Activated CD4-positive, alpha-beta memory T cell treated with anti-CD3 and anti-CD28 coated beads for 36 hours (primary cell): ENCODE measurements at regions of chr17 and their contacts with region 1.

Region 1: DNA sequence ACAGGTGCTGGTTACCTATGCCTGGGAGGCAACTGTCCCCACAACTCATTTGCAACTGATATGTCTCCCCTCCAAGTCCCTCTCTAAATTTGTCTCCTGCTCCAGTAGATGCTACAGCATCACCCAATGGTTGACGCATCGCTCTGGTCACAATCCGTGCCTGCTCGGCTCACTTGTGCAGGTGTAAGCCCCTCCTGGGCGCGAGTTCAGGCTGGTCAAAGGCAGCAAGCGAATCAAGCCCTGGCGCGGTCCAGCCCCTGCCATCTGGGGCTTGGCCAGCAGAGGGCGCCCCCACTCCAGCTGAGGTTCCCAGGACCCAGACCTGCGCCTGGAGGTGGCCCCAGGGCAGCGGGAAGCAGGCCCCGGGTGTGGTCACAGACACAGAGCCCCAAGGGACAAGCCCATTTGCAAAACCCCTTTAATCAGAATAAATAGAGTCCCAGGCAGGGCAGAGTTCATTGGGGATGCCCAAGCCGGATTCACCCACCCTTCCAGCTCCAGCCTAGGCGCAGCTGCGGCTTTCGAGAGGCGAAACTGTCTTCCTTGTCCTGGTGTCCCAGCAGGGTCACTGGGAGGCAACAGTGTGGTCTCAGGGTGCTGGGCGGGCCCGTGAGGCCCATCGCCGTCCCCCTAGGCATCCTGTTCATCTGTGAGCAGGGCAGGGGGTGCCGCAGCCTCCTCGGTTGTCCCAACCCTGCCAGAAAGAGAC is 15.9 kb downstream of the TMC6 start:
- DNase-seq: peak; percentile 86
- H3K4me3 Mint-ChIP-seq: no peak overlapping the region
- H3K27ac Mint-ChIP-seq: peak overlapping the region; percentile 76
- H3K4me1 Mint-ChIP-seq: peaks cover 31% of the 10 kb centered on the region
- H3K27me3 Mint-ChIP-seq: no peaks in the 10 kb centered on the region

Region 2: DNA sequence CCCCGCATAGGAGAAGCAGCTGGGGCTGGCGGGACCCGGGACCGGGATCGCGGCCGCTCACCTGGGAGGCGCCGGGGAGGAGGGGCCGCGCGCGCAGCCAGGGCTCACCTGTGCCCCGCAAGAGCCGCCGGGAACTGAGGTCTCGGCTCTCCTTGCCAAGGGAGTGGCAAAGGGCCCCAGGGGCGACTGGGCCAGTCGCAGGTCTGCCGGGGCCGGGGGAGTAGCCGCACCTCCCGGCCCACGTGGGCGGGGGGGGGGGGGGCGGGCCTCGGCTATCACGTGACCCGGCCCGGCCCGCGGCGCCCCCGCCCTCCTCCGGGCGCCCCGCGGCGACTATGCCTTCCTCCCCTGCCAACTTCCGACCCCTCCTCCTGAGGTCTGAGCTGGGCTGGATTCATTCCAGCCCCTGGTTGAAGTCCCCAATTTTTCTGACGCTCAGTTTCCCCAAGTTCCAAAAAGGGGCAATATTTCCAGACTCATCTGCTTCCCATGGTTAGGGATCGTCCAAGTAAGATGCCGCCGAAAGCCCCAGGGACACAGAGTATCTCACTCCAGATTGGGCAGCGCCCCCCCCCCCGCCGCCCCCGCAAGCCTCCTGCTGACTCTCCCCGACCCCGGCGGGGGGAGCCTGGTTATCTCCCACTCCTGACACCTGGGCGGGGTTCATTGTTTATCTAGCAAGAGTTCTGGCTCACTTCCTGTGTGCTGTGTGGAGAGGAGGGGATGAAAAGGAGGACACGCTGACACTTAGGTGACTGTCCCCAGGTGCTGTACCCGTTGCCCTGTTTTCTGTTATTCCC is 16.1 kb after region 1 on chr17 and contains the start of gene TMC6:
- CTCF ChIA-PET with region 1: interaction called, 99 read pairs
- POLR2A ChIA-PET with region 1: interaction called, 12 read pairs
- intact Hi-C with region 1: no loop called
- DNase-seq: peak; percentile 85
- H3K4me3 Mint-ChIP-seq: peak within 1 kb of the TSS; percentile 97
- H3K27ac Mint-ChIP-seq: peak within 1 kb of the TSS; percentile 95
- H3K4me1 Mint-ChIP-seq: peaks cover 51% of the 10 kb centered on the region
- H3K27me3 Mint-ChIP-seq: no peaks in the 10 kb centered on the region
- total RNA-seq, gene TMC6: 157 to 162 TPM

Region 3: GRCh38 chr17:78133971-78134898 is 21.6 kb after region 1 on chr17:
- CTCF ChIA-PET with region 1: interaction called, 99 read pairs
- POLR2A ChIA-PET with region 1: interaction called, 4 read pairs
- intact Hi-C with region 1: loop called (anchors 1 kb)
- DNase-seq: peak; percentile 87
- H3K4me3 Mint-ChIP-seq: peak overlapping the region; percentile 65
- H3K27ac Mint-ChIP-seq: peak overlapping the region; percentile 54
- H3K4me1 Mint-ChIP-seq: peaks cover 70% of the 10 kb centered on the region
- H3K27me3 Mint-ChIP-seq: no peaks in the 10 kb centered on the region

Region 4: GRCh38 chr17:78140169-78140976 is 27.7 kb after region 1 on chr17:
- CTCF ChIA-PET with region 1: interaction called, 99 read pairs
- POLR2A ChIA-PET with region 1: interaction called, 6 read pairs
- intact Hi-C with region 1: no loop called
- DNase-seq: peak; percentile 98
- H3K4me3 Mint-ChIP-seq: peak overlapping the region; percentile 31
- H3K27ac Mint-ChIP-seq: peak overlapping the region; percentile 63
- H3K4me1 Mint-ChIP-seq: peaks cover 57% of the 10 kb centered on the region
- H3K27me3 Mint-ChIP-seq: no peaks in the 10 kb centered on the region

Region 5: GRCh38 chr17:78168242-78168902 is 55.7 kb after region 1 on chr17 and contains the start of gene SYNGR2:
- CTCF ChIA-PET with region 1: interaction called, 3 read pairs
- POLR2A ChIA-PET with region 1: no interaction called
- intact Hi-C with region 1: loop called (anchors 2 kb)
- DNase-seq: peak; percentile 89
- H3K4me3 Mint-ChIP-seq: peak within 1 kb of the TSS; percentile 72
- H3K27ac Mint-ChIP-seq: peak within 1 kb of the TSS; percentile 74
- H3K4me1 Mint-ChIP-seq: peaks cover 38% of the 10 kb centered on the region
- H3K27me3 Mint-ChIP-seq: no peaks in the 10 kb centered on the region
- total RNA-seq, gene SYNGR2: 79.2 to 87.7 TPM